Dendritic cell treated with granulocyte-macrophage colony-stimulating factor and Interleukin-4, amounts not matched to agents 40 ng/mL and 50 ng/mL, for 4 days (primary cell): ENCODE measurements at regions of chr2 and their contacts with region 1.

Region 1: DNA sequence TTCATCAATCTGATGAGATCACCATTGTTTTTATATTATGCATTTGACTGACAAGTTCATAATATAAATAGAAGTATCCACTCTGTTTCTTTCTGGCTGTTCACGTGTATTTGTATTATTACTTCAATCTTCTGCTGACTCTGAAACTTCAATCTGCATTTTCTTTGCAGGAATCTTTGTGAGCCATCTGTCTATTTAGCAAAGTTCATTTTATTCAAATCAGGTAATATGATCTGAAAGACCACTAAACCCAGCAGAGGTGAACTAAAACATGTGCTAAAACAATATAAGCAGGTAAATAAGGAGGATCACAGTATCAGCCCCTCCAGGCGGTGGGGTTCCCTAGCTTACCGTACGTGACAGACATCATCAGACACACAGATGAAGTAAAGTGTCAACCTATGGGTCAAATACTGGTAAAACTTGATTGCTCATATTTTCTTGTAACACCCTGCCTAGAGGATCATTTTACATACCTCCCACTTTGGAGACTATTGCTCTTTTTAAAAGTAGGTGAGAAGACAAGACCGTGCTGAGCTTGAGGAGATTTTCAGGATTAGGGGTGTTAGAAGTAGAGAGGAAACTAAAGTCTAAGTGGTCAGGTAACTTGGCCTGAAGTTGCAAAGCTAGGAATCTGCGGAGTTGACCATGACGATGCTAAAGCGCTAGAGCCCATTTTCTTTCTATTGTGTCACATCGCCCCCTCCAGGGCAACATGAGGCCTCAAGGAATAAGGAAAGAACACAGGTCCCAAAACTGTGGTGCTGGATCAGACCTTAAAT is 9.0 kb downstream of the DTNB start:
- H3K4me3 Mint-ChIP-seq: no peak overlapping the region
- H3K27ac Mint-ChIP-seq: no peak overlapping the region
- H3K4me1 Mint-ChIP-seq: peaks cover 9% of the 10 kb centered on the region
- H3K27me3 Mint-ChIP-seq: no peaks in the 10 kb centered on the region

Region 2: DNA sequence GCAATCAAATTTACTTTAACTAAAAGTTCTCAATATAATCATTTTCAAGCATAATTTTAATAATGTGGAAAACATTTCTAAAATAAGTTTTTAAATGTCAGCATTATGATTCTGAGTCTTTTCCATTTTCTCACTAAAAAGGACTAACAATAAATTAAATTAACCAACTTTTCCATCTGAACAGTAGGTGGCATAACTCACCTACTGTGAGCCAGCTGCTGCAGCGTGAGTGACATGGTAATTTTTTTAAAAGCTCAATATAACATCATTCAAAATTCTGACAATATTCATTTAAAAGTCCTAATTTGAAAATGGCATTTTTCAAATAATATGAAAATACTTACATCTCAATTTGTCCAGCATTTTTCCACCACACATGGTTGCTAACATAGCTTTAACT is 57.5 kb before region 1 on chr2:
- intact Hi-C with region 1: loop called (anchors 1 kb)
- H3K4me3 Mint-ChIP-seq: no peak overlapping the region
- H3K27ac Mint-ChIP-seq: no peak overlapping the region
- H3K4me1 Mint-ChIP-seq: peaks cover 6% of the 10 kb centered on the region
- H3K27me3 Mint-ChIP-seq: no peaks in the 10 kb centered on the region